ENCODE measurements at regions of chr1 and their contacts with region 1.

Region 1: GRCh38 chr1:161225534-161226319 is at the start of gene TOMM40L:
- DNase-seq: peak; percentile 92
- H3K4me3 ChIP-seq: peak within 1 kb of the TSS; percentile 80
- H3K27ac ChIP-seq: peak within 1 kb of the TSS; percentile 92
- H3K4me1 ChIP-seq: peaks cover 27% of the 10 kb centered on the region
- H3K27me3 ChIP-seq: no peaks in the 10 kb centered on the region
- CTCF ChIP-seq: peak; percentile 70
- total RNA-seq, gene TOMM40L: 39.3 TPM

Region 2: DNA sequence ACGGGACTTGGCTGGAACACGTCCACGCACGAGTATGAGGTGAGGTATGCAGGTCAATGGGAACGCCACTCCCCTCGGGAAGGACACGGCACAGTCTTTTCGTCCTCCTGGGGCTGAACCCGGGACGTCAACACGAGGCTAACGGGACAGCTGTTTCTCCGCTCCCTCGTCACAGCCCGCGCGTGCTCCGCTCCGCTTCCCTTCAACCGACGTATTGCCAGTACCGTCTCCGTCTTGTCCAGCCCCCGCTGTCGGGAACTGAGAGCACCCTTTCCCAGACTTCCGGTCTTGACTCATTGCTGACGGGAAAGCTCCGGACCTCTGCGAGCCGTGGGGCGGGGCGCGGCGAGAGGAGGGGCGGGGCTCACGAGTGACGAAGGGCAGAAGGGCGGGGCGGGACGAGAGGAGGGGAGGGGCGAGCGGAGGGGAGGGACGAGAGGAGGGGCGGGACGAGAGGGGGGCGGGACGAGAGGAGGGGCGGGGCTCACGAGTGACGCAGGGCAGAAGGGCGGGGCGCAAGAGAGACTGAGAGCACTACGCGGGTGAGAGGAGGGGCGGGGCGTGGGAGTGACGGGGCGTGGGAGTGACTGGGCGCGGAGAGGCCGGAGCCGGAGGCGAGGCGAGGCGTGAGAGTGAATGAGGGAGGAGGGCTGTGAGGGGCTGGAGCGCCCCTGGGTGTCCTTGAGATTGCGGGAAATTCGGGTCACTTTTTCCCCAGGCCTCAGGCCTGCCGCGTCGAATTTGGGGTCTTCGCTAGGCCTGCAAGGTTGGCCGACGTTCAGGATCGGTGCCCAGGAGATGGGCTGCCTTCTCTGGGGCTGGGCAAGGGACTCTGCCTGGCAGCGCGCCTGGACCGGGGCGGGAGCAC is 164.2 kb after region 1 on chr1:
- intact Hi-C with region 1: loop called (anchors 10 kb)
- DNase-seq: peak; percentile 98
- H3K4me3 ChIP-seq: peak overlapping the region; percentile 75
- H3K27ac ChIP-seq: peak overlapping the region; percentile 97
- H3K4me1 ChIP-seq: peaks cover 14% of the 10 kb centered on the region
- H3K27me3 ChIP-seq: no peaks in the 10 kb centered on the region
- CTCF ChIP-seq: no peak

Measured in left ventricle myocardium inferior (tissue), 1 donor.